Activated CD4-positive, alpha-beta memory T cell treated with anti-CD3 and anti-CD28 coated beads for 36 hours (primary cell): ENCODE measurements at regions of chr18 and their contacts with region 1.

Region 1: GRCh38 chr18:76686737-76687262 is 135.6 kb upstream of the ZNF236 start:
- DNase-seq: peak; percentile 27
- H3K4me3 Mint-ChIP-seq: no peak overlapping the region
- H3K27ac Mint-ChIP-seq: peak overlapping the region; percentile 10
- H3K4me1 Mint-ChIP-seq: peaks cover 16% of the 10 kb centered on the region
- H3K27me3 Mint-ChIP-seq: peaks cover 39% of the 10 kb centered on the region

Region 2: DNA sequence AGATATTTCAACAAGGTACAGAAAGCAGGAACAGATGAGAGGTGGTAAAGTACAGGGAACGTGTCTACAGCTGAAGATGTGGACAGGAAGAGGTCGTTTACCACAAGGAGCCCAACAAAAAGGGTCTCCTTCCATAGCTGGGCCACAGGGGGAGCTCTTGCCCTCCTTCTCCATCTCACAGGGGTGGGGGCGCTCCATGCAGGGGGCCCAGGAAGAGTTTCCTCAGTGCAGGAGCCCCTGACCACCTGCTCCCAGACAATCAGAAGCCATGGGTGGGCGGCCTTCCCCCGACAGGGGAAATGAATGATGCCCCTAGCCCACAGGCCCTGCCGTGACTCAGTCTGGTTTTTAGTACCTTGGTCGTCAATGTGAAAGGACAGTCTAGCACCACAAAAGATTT is 28.2 kb before region 1 on chr18:
- CTCF ChIA-PET with region 1: no interaction called
- POLR2A ChIA-PET with region 1: no interaction called
- intact Hi-C with region 1: loop called (anchors 2 kb)
- DNase-seq: peak; percentile 46
- H3K4me3 Mint-ChIP-seq: no peak overlapping the region
- H3K27ac Mint-ChIP-seq: no peak overlapping the region
- H3K4me1 Mint-ChIP-seq: peaks cover 15% of the 10 kb centered on the region
- H3K27me3 Mint-ChIP-seq: peaks cover 34% of the 10 kb centered on the region

Region 3: DNA sequence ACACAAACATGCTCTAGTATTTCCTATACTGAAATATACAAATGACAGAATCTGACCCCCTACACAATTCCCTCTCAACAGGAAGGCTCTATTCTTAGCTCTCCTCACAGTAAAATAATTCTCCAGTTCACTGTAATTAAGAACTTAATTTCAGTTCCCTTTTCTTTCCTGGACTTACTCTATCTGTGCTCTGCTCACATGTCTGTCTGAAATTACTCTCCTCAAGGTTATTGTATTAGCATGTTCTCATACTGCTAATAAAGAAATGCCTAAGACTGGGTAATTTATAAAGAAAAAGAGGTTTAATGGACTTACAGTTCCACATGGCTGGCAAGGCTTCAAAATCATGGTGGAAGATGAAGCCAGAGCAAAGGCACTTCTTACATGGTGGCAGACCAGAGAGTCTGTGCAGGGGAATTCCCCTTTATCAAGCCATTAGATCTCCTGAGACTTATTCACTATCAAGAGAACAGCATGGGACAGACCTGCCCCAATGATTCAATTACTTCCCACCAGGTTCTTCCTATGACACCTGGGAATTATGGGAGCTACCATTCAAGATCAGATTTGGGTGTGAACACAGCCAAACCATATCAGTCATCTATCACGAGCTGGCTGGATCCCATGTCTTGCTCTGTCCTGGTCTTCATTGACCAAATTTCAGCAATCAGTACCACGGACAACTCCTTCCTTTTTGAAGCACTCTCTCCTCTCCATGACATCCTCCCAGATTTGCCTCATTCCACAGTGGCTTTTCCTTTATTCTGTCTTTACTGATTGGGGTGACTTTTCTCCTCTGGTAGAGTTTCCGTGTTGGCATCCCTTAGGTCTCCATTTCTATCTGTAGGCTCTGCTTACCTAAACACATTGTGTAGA is 673.8 kb after region 1 on chr18:
- CTCF ChIA-PET with region 1: no interaction called
- POLR2A ChIA-PET with region 1: no interaction called
- intact Hi-C with region 1: no loop called
- DNase-seq: no peak
- H3K4me3 Mint-ChIP-seq: no peak overlapping the region
- H3K27ac Mint-ChIP-seq: no peak overlapping the region
- H3K4me1 Mint-ChIP-seq: no peaks in the 10 kb centered on the region
- H3K27me3 Mint-ChIP-seq: peaks cover 38% of the 10 kb centered on the region